ENCODE measurements at regions of chr17 and their contacts with region 1.

Region 1: GRCh38 chr17:80663781-80664206 is 119.2 kb downstream of the RPTOR start:
- DNase-seq: peak; percentile 67
- H3K4me3 Mint-ChIP-seq: peak overlapping the region; percentile 51
- H3K27ac Mint-ChIP-seq: peak overlapping the region; percentile 86
- H3K4me1 Mint-ChIP-seq: peaks cover 73% of the 10 kb centered on the region
- H3K27me3 Mint-ChIP-seq: no peaks in the 10 kb centered on the region

Region 2: GRCh38 chr17:80605326-80606066 is 58.3 kb before region 1 on chr17:
- CTCF ChIA-PET with region 1: interaction called, 3 read pairs
- intact Hi-C with region 1: loop called (anchors 5 kb)
- DNase-seq: peak; percentile 82
- H3K4me3 Mint-ChIP-seq: no peak overlapping the region
- H3K27ac Mint-ChIP-seq: peak overlapping the region; percentile 69
- H3K4me1 Mint-ChIP-seq: peaks cover 64% of the 10 kb centered on the region
- H3K27me3 Mint-ChIP-seq: no peaks in the 10 kb centered on the region

Region 3: DNA sequence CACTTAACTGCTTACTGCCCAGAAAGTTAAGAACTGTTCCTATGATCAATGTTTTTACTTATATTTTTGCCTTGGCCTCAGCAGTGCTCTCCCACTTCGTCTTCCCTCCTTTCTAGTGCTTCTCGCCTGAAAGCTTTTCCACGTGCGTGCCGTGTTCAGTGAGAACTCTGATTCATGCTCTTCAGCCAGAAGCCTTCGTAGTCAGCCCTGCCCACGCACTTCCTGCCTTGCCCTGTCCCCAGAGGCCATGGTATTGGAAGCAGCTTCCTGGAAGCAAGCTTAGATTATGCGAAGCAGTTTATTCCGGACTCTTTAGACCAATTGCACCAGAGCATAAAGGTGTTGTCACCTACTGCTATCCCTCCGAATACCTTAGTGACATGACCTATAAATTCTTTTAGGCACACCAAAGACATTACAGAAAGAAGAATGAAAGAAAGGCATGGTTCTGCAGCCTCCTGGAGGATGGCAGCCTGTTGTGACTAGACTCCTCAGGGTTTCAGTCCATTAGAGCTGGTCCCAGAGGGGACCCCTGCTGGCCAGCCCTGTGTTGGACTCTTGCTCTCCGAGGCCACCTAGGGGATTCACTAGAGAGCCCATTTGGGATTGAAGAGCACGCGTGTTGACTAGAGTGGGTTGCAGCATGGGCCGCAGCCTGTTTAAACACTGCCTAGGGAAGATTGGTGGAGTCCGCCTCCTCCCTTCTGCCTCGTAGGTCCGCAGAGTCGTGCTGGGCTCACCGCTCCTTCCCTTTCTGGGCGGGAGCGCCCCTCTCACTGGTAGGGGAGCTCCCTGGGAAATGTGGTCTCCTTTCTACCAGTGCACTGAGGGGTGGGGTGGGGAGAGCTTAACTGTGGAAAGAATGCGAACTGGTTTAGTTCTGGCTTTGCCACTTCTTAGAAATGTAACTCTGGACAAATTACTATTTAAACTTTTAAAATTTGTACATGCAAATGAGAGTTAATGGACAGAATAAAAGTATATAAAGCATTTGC is 13.8 kb before region 1 on chr17:
- CTCF ChIA-PET with region 1: interaction called, 4 read pairs
- intact Hi-C with region 1: loop called (anchors 2 kb)
- DNase-seq: peak; percentile 91
- H3K4me3 Mint-ChIP-seq: peak overlapping the region; percentile 0
- H3K27ac Mint-ChIP-seq: peak overlapping the region; percentile 81
- H3K4me1 Mint-ChIP-seq: peaks cover 73% of the 10 kb centered on the region
- H3K27me3 Mint-ChIP-seq: no peaks in the 10 kb centered on the region

Region 4: GRCh38 chr17:80675438-80676095 is 11.8 kb after region 1 on chr17:
- CTCF ChIA-PET with region 1: no interaction called
- intact Hi-C with region 1: loop called (anchors 2 kb)
- DNase-seq: no peak
- H3K4me3 Mint-ChIP-seq: no peak overlapping the region
- H3K27ac Mint-ChIP-seq: no peak overlapping the region
- H3K4me1 Mint-ChIP-seq: peaks cover 70% of the 10 kb centered on the region
- H3K27me3 Mint-ChIP-seq: no peaks in the 10 kb centered on the region

Region 5: GRCh38 chr17:80737106-80738019 is 73.6 kb after region 1 on chr17:
- CTCF ChIA-PET with region 1: no interaction called
- intact Hi-C with region 1: no loop called
- DNase-seq: no peak
- H3K4me3 Mint-ChIP-seq: no peak overlapping the region
- H3K27ac Mint-ChIP-seq: no peak overlapping the region
- H3K4me1 Mint-ChIP-seq: peaks cover 49% of the 10 kb centered on the region
- H3K27me3 Mint-ChIP-seq: no peaks in the 10 kb centered on the region

Region 6: DNA sequence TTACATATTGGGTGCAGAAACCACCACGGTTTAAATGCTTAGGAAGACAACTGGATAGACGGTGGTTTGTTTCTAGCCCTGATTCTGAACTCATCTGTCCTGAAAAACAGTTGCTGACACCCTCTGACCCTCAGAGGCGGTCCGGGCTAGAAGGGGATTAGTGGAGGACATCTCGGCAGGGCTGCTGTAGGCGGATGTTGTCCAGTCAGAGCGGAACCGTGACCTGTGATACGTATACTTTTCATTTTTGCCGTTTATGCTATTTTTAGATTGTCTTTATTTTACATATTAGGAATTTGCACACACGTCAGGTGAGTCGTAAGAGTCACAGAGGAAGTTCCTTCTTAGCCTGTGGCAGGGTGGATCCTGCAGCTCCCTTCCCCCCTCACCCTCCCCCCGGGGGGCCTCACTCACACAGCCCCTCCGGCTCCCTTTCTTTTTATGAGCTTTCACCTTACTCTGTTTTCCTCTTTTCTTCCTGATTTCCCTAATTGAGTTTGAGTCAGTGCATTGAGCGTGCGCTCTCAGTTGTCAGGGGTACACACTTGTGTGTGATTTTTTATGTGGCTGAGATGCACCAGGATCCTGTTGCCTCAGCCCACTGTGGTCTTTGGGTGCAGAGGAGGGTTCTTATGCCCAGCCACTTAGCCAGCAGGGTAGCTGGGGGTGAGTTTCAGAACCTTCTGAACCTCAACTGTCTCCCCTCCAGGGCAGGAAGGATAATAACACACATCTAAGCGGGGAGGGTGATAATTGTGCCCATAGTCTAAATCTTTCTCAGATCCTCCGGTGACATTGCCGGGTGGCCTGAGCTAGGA is 116.8 kb after region 1 on chr17:
- CTCF ChIA-PET with region 1: no interaction called
- intact Hi-C with region 1: loop called (anchors 1 kb)
- DNase-seq: peak; percentile 76
- H3K4me3 Mint-ChIP-seq: peak overlapping the region; percentile 76
- H3K27ac Mint-ChIP-seq: peak overlapping the region; percentile 98
- H3K4me1 Mint-ChIP-seq: peaks cover 79% of the 10 kb centered on the region
- H3K27me3 Mint-ChIP-seq: no peaks in the 10 kb centered on the region

Region 7: DNA sequence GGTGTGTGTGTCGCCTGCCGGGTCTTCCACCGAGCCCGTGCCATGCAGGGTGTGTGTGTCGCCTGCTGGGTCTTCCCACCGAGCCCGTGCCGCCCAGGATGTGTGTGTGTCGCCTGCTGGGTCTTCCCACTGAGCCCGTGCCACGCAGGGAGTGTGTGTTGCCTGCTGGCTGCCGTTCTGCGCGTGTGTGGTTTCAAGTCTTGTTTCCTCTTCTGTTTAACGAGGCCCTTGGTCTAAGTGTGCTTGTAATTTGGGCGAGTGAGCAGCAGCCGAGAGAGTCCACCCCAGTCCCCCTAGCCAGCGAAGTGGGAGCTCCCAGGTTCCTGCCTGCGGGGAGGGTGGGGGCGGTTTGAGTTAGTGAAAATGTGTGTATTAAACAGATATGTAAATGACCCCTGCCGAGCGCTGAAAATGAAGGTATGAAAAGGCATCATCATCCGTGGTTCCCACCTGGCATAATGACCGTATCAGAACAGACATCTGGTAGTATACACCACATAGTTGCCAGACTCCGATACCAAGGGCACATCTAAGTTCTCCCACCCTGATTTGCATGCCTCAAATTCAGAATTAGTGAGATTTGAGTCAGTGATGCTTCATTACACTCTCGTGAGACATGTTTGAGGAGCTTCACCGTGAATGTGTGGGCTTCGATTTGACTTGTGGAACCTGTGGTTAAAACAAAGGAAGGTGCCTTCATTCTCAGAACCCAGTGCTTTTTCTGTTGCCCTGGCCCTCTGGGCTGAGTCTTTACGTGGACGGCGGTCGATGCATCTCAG is 213.3 kb after region 1 on chr17:
- CTCF ChIA-PET with region 1: no interaction called
- intact Hi-C with region 1: loop called (anchors 1 kb)
- DNase-seq: peak; percentile 85
- H3K4me3 Mint-ChIP-seq: peak overlapping the region; percentile 64
- H3K27ac Mint-ChIP-seq: peak overlapping the region; percentile 96
- H3K4me1 Mint-ChIP-seq: peaks cover 51% of the 10 kb centered on the region
- H3K27me3 Mint-ChIP-seq: no peaks in the 10 kb centered on the region